WTC11 (cell line): ENCODE measurements at regions of chr17 and their contacts with region 1.

Region 1: DNA sequence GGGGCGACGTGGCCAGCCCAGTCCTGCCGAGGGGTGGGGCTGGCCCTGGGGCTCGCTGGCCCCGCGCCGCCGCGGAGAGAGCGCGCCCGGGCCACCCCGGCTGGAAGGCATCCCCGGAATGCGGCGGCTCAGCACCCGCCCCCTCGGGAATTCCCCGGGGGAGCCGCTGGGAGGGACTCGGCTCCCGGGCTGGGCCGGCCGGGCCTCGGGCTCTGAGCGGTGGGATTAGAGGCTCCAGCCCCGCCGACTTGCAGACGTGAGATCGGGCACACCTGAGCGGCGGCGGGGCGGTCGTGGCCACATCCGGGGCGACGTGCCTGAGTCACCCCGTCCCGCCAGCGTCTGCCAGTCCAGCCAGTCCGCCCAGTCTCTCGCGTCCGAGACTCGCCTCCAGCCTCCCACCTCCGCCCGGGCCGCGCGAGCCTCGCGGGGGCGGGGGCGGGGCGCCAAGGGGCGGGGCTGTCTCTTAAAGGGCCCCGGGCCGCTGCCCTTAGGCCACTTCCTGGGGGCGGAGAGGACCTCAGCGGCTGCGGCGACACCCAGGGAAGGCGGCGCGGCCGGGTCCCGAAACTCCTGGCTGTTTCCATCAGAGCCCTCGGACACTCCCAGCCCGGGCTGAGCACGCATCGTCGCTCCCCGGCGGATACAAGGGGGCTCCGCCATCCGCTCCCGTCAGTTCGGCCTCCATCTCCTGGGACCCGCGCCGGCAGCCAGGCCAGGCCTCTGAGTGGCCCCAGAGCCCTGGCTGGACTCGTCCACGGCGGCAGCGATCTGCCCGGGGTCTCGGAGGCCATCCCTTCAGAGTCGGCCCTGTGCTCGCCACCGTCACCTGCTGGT is at the start of gene KCTD11:
- DNase-seq: peak; percentile 89
- ATAC-seq: peak; percentile 38
- H3K4me3 Mint-ChIP-seq: peak within 1 kb of the TSS; percentile 81
- H3K27ac Mint-ChIP-seq: peak within 1 kb of the TSS; percentile 60; the same call in 1 of the 2 replicates
- H3K4me1 Mint-ChIP-seq: peaks cover 33% of the 10 kb centered on the region
- H3K27me3 Mint-ChIP-seq: peaks cover 7% of the 10 kb centered on the region
- CTCF ChIP-seq: no peak
- total RNA-seq, gene KCTD11: 8.1 to 9.0 TPM (median 8.2 TPM) in 3 replicates

Region 2: GRCh38 chr17:7329374-7329996 is 22.4 kb before region 1 on chr17:
- CTCF ChIA-PET with region 1: interaction called, 27 read pairs
- POLR2A ChIA-PET with region 1: interaction called, 6 read pairs
- DNase-seq: peak; percentile 98
- ATAC-seq: peak; percentile 73
- H3K4me3 Mint-ChIP-seq: peak overlapping the region; percentile 93
- H3K27ac Mint-ChIP-seq: peak overlapping the region; percentile 100
- H3K4me1 Mint-ChIP-seq: peaks cover 24% of the 10 kb centered on the region
- H3K27me3 Mint-ChIP-seq: no peaks in the 10 kb centered on the region
- CTCF ChIP-seq: no peak

Region 3: DNA sequence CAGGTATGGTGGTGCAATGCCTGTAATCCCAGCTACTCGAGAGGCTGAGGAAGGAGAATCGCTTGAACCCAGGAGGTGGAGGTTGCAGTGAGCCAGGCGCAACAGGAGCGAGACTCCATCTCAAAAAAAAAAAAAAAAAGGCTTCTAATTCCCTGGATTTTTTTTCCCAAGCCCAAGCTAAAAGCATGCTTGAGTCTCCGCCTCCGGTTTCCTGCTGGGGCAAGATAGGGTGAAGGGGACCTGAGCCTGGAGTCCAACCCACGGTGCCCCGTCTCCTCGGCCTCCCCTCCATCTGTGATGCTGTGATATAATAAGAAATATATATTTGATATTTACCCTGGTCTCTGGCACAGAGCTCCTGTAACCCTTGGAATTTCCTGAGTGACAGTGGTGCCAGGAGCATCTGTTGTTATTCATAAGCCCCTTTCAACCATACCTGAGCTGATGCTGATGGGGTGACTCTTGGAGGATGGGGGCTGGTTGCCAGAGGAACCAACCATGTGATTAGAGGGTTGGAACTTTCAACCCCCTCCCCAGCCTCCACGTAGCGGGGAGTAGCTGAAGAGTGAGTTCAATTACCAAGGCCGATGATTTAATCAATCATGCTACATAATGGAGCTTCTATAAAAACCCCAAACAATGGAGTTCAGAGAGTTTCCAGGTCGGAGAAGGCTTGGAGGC is 16.2 kb after region 1 on chr17:
- CTCF ChIA-PET with region 1: interaction called, 22 read pairs
- POLR2A ChIA-PET with region 1: interaction called, 3 read pairs
- DNase-seq: no peak
- ATAC-seq: peak; percentile 38
- H3K4me3 Mint-ChIP-seq: no peak overlapping the region
- H3K27ac Mint-ChIP-seq: peak overlapping the region; percentile 89
- H3K4me1 Mint-ChIP-seq: peaks cover 29% of the 10 kb centered on the region
- H3K27me3 Mint-ChIP-seq: peaks cover 4% of the 10 kb centered on the region
- CTCF ChIP-seq: no peak

Region 4: DNA sequence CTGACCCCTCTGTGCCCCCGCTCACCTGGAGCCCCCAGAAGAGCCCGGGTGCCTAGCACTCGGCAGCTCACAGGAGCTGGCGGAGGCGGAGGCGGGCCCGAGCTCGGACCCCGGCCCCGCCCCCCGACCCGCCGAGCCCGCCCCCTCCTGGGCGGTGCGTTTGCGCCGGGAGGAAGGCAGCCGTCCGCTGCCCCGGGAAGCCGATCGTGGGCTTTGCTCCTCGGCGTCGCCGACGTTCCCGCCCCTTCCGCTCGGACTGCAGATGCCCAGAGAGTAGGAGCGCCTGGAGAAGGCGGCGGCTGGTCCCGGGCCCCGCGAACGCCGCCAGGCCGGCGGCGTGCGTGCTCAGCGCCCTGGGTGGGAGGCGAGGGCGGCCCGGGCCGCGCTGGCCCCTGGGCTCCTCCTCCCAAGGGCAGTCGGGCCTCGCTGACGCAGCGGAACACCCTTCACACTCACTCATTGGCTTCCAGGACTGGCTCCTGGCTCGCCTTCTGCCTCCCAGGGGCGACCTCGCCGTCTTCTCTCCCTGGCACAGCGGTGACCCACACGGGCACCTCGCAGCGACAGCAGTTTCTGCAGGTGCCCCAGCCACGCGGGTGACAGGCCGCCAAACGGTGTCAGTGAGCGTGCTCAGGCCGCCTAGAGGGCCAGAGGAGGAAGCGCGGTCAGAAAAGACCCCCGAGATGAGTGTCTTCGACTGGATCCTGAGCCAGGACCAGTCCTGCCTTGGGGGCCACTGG is 42.7 kb after region 1 on chr17 and contains the start of gene PLSCR3:
- CTCF ChIA-PET with region 1: interaction called, 26 read pairs
- POLR2A ChIA-PET with region 1: no interaction called
- DNase-seq: peak; percentile 87
- ATAC-seq: peak; percentile 78
- H3K4me3 Mint-ChIP-seq: peak within 1 kb of the TSS; percentile 90
- H3K27ac Mint-ChIP-seq: peak within 1 kb of the TSS; percentile 85
- H3K4me1 Mint-ChIP-seq: peaks cover 11% of the 10 kb centered on the region
- H3K27me3 Mint-ChIP-seq: no peaks in the 10 kb centered on the region; the same call in 1 of the 2 replicates
- CTCF ChIP-seq: no peak
- total RNA-seq, gene PLSCR3: 34.1 to 42.7 TPM (median 37.6 TPM) in 3 replicates

Region 5: DNA sequence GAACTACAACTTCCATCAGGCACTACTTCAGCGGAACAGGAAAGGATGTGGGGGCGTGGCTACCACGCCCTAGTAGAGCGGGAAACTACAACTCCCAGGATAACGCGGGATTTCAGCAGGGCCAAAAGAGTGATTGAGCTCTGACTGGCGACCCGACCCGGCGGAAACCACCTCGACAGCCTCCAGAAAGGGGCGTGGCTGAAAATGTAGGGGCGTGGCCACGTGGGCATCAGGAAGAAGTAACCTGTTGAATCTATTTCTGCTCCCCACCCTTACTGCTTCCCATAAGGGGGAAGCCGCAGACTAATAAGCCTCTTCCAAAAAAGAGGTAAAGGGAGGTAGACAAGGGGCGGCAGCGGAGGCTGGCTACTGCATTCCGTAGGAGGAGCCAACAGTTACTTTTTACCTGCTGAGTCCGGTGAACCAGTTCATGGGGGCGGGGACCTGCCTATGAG is 83.4 kb after region 1 on chr17 and contains the start of gene TMEM102:
- CTCF ChIA-PET with region 1: interaction called, 69 read pairs
- POLR2A ChIA-PET with region 1: interaction called, 3 read pairs
- DNase-seq: peak; percentile 98
- ATAC-seq: peak; percentile 71
- H3K4me3 Mint-ChIP-seq: peak within 1 kb of the TSS; percentile 90
- H3K27ac Mint-ChIP-seq: peak within 1 kb of the TSS; percentile 98
- H3K4me1 Mint-ChIP-seq: peaks cover 17% of the 10 kb centered on the region
- H3K27me3 Mint-ChIP-seq: peaks cover 17% of the 10 kb centered on the region
- CTCF ChIP-seq: no peak
- total RNA-seq, gene TMEM102: 13.5 to 15.3 TPM (median 13.9 TPM) in 3 replicates

Region 6: GRCh38 chr17:7502987-7503386 is 151.1 kb after region 1 on chr17:
- CTCF ChIA-PET with region 1: interaction called, 13 read pairs
- POLR2A ChIA-PET with region 1: no interaction called
- DNase-seq: peak; percentile 66
- ATAC-seq: peak; percentile 82
- H3K4me3 Mint-ChIP-seq: no peak overlapping the region
- H3K27ac Mint-ChIP-seq: no peak overlapping the region
- H3K4me1 Mint-ChIP-seq: no peaks in the 10 kb centered on the region
- H3K27me3 Mint-ChIP-seq: no peaks in the 10 kb centered on the region
- CTCF ChIP-seq: no peak